Calu3 (cell line): ENCODE measurements at regions of chr5 and their contacts with region 1.

Region 1: GRCh38 chr5:143824851-143825720 is 13.1 kb downstream of the HMHB1 start:
- DNase-seq: peak; percentile 90
- H3K4me3 Mint-ChIP-seq: no peak overlapping the region
- H3K27ac Mint-ChIP-seq: no peak overlapping the region
- H3K4me1 Mint-ChIP-seq: no peaks in the 10 kb centered on the region
- H3K27me3 Mint-ChIP-seq: no peaks in the 10 kb centered on the region
- CTCF ChIP-seq: peak; percentile 99

Region 2: GRCh38 chr5:143002459-143003328 is 822.4 kb before region 1 on chr5:
- CTCF ChIA-PET with region 1: interaction called, 9 read pairs
- intact Hi-C with region 1: loop called (anchors 10 kb)
- DNase-seq: peak; percentile 7
- H3K4me3 Mint-ChIP-seq: no peak overlapping the region
- H3K27ac Mint-ChIP-seq: peak overlapping the region; percentile 56
- H3K4me1 Mint-ChIP-seq: peaks cover 26% of the 10 kb centered on the region
- H3K27me3 Mint-ChIP-seq: no peaks in the 10 kb centered on the region
- CTCF ChIP-seq: no peak

Region 3: GRCh38 chr5:143506881-143507551 is 318.1 kb before region 1 on chr5:
- CTCF ChIA-PET with region 1: no interaction called
- intact Hi-C with region 1: loop called (anchors 2 kb)
- DNase-seq: peak; percentile 64
- H3K4me3 Mint-ChIP-seq: peak overlapping the region; percentile 4
- H3K27ac Mint-ChIP-seq: peak overlapping the region; percentile 73
- H3K4me1 Mint-ChIP-seq: peaks cover 46% of the 10 kb centered on the region
- H3K27me3 Mint-ChIP-seq: no peaks in the 10 kb centered on the region
- CTCF ChIP-seq: no peak

Region 4: GRCh38 chr5:143629871-143630659 is 195.0 kb before region 1 on chr5:
- CTCF ChIA-PET with region 1: interaction called, 3 read pairs
- intact Hi-C with region 1: loop called (anchors 10 kb)
- DNase-seq: peak; percentile 31
- H3K4me3 Mint-ChIP-seq: peak overlapping the region; percentile 20
- H3K27ac Mint-ChIP-seq: peak overlapping the region; percentile 96
- H3K4me1 Mint-ChIP-seq: peaks cover 73% of the 10 kb centered on the region
- H3K27me3 Mint-ChIP-seq: no peaks in the 10 kb centered on the region
- CTCF ChIP-seq: no peak

Region 5: GRCh38 chr5:144142139-144142823 is 317.2 kb after region 1 on chr5:
- CTCF ChIA-PET with region 1: interaction called, 3 read pairs
- intact Hi-C with region 1: loop called (anchors 5 kb)
- DNase-seq: no peak
- H3K4me3 Mint-ChIP-seq: no peak overlapping the region
- H3K27ac Mint-ChIP-seq: no peak overlapping the region
- H3K4me1 Mint-ChIP-seq: peaks cover 26% of the 10 kb centered on the region
- H3K27me3 Mint-ChIP-seq: peaks cover 14% of the 10 kb centered on the region
- CTCF ChIP-seq: no peak